Vagina (tissue), 2 donors: ENCODE measurements at regions of chr7 and their contacts with region 1.

Region 1: DNA sequence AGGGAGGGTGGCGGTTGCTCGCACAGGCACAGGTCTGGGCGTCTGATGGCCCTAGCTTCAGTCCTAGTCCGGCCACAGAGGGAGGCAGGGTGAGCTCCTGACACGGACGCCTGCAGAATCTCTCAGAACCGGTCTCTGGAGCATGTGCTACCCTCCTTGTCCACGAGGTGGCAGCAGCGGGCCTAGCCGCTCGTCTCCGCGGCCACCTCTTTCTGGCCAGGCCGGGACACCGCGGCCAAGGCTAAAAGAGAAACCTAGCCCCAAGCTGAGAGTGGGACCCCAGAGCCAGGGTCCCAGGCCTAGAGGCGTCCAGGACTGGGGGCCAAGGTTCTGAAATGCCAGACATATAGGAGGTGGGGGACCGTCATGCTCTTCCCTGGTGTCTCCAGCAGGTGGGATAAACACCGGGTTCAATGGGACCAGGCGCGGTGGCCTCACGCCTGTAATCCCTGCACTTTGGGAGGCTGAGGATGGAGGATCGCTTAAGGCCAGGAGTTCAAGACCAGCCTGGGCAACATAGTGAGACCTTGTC is 3.2 kb upstream of the LAT2 start:
- DNase-seq: no peak
- H3K4me3 ChIP-seq: peak overlapping the region in 1 of 2 donors; percentile 27
- H3K27ac ChIP-seq: no peak overlapping the region
- H3K4me1 ChIP-seq: peaks cover 28% of the 10 kb centered on the region
- H3K27me3 ChIP-seq: no peaks in the 10 kb centered on the region
- CTCF ChIP-seq: peak; percentile 90 to 97 (median 97)
- POLR2A ChIP-seq: no peak

Region 2: GRCh38 chr7:74395745-74396311 is 189.2 kb after region 1 on chr7:
- intact Hi-C with region 1: loop called (anchors 2 kb)
- DNase-seq: no peak
- H3K4me3 ChIP-seq: no peak overlapping the region
- H3K27ac ChIP-seq: no peak overlapping the region
- H3K4me1 ChIP-seq: no peaks in the 10 kb centered on the region
- H3K27me3 ChIP-seq: no peaks in the 10 kb centered on the region
- CTCF ChIP-seq: no peak
- POLR2A ChIP-seq: no peak

Region 3: GRCh38 chr7:74466196-74466813 is 259.6 kb after region 1 on chr7:
- intact Hi-C with region 1: no loop called
- DNase-seq: no peak
- H3K4me3 ChIP-seq: no peak overlapping the region
- H3K27ac ChIP-seq: peak overlapping the region; percentile 57
- H3K4me1 ChIP-seq: peaks cover 32% of the 10 kb centered on the region
- H3K27me3 ChIP-seq: no peaks in the 10 kb centered on the region
- CTCF ChIP-seq: no peak
- POLR2A ChIP-seq: no peak